ENCODE measurements at regions of chr11 and their contacts with region 1.

Region 1: GRCh38 chr11:26947379-26947844 is 46.5 kb upstream of the FIBIN start:
- DNase-seq: peak; percentile 99
- H3K4me3 ChIP-seq: no peak overlapping the region
- H3K27ac ChIP-seq: no peak overlapping the region
- H3K27me3 ChIP-seq: no peaks in the 10 kb centered on the region
- CTCF ChIP-seq: no peak

Region 2: GRCh38 chr11:26929806-26930517 is 17.4 kb before region 1 on chr11:
- CTCF ChIA-PET with region 1: interaction called, 3 read pairs
- POLR2A ChIA-PET with region 1: interaction called, 15 read pairs
- DNase-seq: no peak
- H3K4me3 ChIP-seq: no peak overlapping the region
- H3K27ac ChIP-seq: no peak overlapping the region
- H3K27me3 ChIP-seq: no peaks in the 10 kb centered on the region
- CTCF ChIP-seq: no peak

Region 3: DNA sequence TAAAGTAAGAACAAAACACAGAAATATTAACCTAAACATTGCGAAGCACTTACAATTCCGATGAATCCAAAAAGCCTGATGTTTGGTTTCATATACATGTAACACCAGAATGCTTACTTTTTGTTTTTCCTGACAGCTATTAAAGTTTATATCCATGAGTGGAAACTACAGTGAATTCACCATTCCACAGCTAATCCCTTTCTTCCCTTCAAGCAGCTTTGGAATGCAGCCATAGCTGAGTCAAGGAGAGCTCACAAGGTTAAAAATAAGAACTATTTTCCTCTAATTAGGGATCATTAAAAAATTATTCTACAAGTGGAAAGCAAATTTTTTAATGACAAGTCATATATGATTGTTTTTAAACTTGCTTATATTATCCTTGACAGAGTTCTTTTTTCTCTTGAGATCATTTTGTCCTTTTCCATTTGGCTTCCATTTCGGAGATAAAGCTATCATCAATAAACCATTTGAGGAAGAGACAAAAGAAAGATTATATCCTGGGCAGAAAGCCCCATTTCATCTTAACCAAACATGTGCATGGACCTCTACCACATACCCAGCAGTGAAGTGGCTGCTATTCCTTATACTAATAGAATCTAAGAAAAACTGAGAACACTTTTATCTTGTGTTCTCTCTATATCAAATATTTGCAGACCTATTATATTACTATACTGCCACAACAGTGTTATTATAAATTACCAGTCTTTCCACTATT is 26.8 kb after region 1 on chr11:
- CTCF ChIA-PET with region 1: no interaction called
- POLR2A ChIA-PET with region 1: interaction called, 11 read pairs
- DNase-seq: peak; percentile 42
- H3K4me3 ChIP-seq: no peak overlapping the region
- H3K27ac ChIP-seq: no peak overlapping the region
- H3K27me3 ChIP-seq: no peaks in the 10 kb centered on the region
- CTCF ChIP-seq: no peak

Region 4: GRCh38 chr11:27076121-27076589 is 128.7 kb after region 1 on chr11:
- CTCF ChIA-PET with region 1: no interaction called
- POLR2A ChIA-PET with region 1: interaction called, 18 read pairs
- DNase-seq: no peak
- H3K4me3 ChIP-seq: no peak overlapping the region
- H3K27ac ChIP-seq: no peak overlapping the region
- H3K27me3 ChIP-seq: no peaks in the 10 kb centered on the region
- CTCF ChIP-seq: no peak